Activated CD4-positive, alpha-beta T cell treated with anti-CD3 and anti-CD28 coated beads for 36 hours (primary cell): ENCODE measurements at regions of chr9 and their contacts with region 1.

Region 1: DNA sequence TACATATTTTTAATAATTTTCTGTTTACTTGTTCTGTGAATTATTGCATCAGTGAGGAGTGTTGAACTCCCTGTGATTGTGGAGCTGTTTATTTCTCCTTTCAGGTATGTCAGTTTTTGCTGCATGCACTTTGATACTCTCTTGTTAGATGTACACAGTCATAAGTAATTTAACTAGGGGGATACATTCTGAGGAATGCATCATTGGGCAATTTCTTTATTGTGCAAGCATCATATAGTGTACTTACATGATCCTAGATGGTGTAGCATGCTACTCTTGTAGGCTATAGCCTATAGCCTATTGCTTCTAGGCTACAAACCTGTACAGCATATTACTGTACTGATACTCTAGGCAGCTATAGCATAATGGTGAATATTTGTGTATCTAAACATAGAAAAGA is 9.5 kb downstream of the DENND4C start:
- DNase-seq: no peak
- ATAC-seq: no peak
- H3K4me3 Mint-ChIP-seq: no peak overlapping the region
- H3K27ac Mint-ChIP-seq: no peak overlapping the region
- H3K4me1 Mint-ChIP-seq: peaks cover 29% of the 10 kb centered on the region
- H3K27me3 Mint-ChIP-seq: no peaks in the 10 kb centered on the region

Region 2: GRCh38 chr9:19027825-19028224 is 212.1 kb before region 1 on chr9:
- CTCF ChIA-PET with region 1: no interaction called
- POLR2A ChIA-PET with region 1: no interaction called
- intact Hi-C with region 1: no loop called
- DNase-seq: no peak
- ATAC-seq: no peak
- H3K4me3 Mint-ChIP-seq: no peak overlapping the region
- H3K27ac Mint-ChIP-seq: no peak overlapping the region
- H3K4me1 Mint-ChIP-seq: peaks cover 7% of the 10 kb centered on the region
- H3K27me3 Mint-ChIP-seq: peaks cover 11% of the 10 kb centered on the region

Region 3: DNA sequence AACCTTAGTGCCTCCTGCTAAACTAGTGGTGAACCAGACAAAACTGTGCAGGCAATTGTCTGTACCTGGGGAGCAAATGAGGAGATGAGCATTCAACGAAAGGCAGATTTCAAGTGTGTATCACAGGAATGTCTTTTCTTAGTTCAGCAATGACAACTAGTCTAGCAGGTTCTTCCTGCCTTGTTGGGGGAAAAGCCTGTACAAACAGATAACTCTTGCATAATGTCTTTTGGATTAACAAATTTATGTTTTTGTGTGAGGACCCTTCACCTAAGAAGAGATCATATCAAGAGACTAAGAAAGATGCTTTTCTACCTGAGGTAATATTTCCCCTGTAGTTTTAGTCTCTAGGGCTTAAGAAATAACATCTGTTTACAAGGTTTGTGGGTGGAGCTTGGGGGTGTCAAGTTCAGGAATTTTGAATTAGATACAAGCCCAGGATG is 31.2 kb before region 1 on chr9:
- CTCF ChIA-PET with region 1: no interaction called
- POLR2A ChIA-PET with region 1: no interaction called
- intact Hi-C with region 1: loop called in 1 of 2 experiments (anchors 2 kb)
- DNase-seq: no peak
- ATAC-seq: no peak
- H3K4me3 Mint-ChIP-seq: no peak overlapping the region
- H3K27ac Mint-ChIP-seq: no peak overlapping the region
- H3K4me1 Mint-ChIP-seq: no peaks in the 10 kb centered on the region
- H3K27me3 Mint-ChIP-seq: no peaks in the 10 kb centered on the region

Region 4: GRCh38 chr9:20111173-20111843 is 871.4 kb after region 1 on chr9:
- CTCF ChIA-PET with region 1: no interaction called
- POLR2A ChIA-PET with region 1: no interaction called
- intact Hi-C with region 1: no loop called
- DNase-seq: no peak
- ATAC-seq: no peak
- H3K4me3 Mint-ChIP-seq: no peak overlapping the region
- H3K27ac Mint-ChIP-seq: no peak overlapping the region
- H3K4me1 Mint-ChIP-seq: no peaks in the 10 kb centered on the region
- H3K27me3 Mint-ChIP-seq: no peaks in the 10 kb centered on the region